CD4-positive, alpha-beta memory T cell (primary cell): ENCODE measurements at regions of chr19 and their contacts with region 1.

Region 1: GRCh38 chr19:57578487-57579205 is at the start of gene ZNF416:
- DNase-seq: peak; percentile 94 to 98 (median 97)
- H3K4me3 ChIP-seq: peak within 1 kb of the TSS; percentile 53 to 73
- H3K4me3 Mint-ChIP-seq: peak within 1 kb of the TSS; percentile 84 to 88 (median 88)
- H3K27ac ChIP-seq: peak within 1 kb of the TSS; percentile 68
- H3K27ac Mint-ChIP-seq: peak within 1 kb of the TSS; percentile 78 to 92 (median 86)
- H3K4me1 ChIP-seq: peaks cover 24% of the 10 kb centered on the region
- H3K4me1 Mint-ChIP-seq: peaks cover 17 to 36% (median 20%) of the 10 kb centered on the region in 4 donors
- H3K27me3 ChIP-seq: no peaks in the 10 kb centered on the region
- H3K27me3 Mint-ChIP-seq: no peaks in the 10 kb centered on the region
- total RNA-seq, gene ZNF416: 12.0 to 13.9 TPM

Region 2: GRCh38 chr19:57362997-57363705 is 215.5 kb before region 1 on chr19 and contains the starts of genes TRAPPC2B and ZNF547:
- CTCF ChIA-PET with region 1: no interaction called
- POLR2A ChIA-PET with region 1: no interaction called
- intact Hi-C with region 1: loop called (anchors 2 kb)
- DNase-seq: peak; percentile 97 to 99 (median 99)
- H3K4me3 ChIP-seq: peak within 1 kb of the TSS; percentile 51 to 70
- H3K4me3 Mint-ChIP-seq: peak within 1 kb of the TSS; percentile 92 to 97 (median 94)
- H3K27ac ChIP-seq: peak within 1 kb of the TSS; percentile 76
- H3K27ac Mint-ChIP-seq: peak within 1 kb of the TSS; percentile 97 to 99 (median 99)
- H3K4me1 ChIP-seq: peaks cover 12% of the 10 kb centered on the region
- H3K4me1 Mint-ChIP-seq: peaks cover 12 to 18% (median 16%) of the 10 kb centered on the region in 4 donors
- H3K27me3 ChIP-seq: no peaks in the 10 kb centered on the region
- H3K27me3 Mint-ChIP-seq: peaks cover 0 to 2% of the 10 kb centered on the region in 2 donors
- total RNA-seq, gene TRAPPC2B: 11.0 to 12.1 TPM
- total RNA-seq, gene ZNF547: 6.5 to 10.8 TPM

Region 3: DNA sequence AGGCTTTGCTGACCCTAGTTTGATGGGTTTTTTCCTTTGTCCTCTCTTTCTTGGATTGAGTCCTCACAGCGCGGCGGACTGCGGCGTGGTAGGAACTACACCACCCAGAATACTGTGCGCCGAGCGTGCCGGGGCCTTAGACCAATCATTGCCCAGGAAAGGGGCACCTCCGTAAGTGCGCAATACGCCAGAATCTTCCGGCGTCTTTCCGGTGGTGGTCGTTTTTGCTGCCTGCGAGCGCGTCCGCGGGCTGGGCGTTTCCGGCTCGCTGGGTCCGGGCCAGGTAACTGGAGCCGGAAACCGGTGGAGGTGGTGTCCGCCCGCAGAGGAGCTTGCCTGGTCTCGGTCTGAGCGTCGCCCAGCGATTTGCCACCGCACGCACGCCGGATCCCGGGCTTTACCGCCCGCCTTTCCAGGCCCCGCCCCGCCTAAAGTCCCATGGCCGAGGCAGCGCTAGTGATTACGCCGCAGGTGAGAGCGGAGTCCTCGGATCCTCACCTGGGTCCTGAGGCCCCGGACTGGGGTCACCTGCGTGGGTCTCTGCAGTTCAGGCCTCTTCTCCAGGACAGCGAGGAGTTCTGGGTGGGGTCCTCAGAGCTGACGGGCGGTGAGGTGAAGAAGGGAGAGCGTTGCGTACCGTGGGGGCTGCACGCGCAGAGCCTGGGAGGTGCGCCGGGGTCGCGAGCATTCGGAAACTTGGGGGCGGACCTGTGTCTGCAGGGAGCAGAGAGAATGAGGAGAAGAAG is 51.3 kb before region 1 on chr19 and contains the start of gene ZNF549:
- CTCF ChIA-PET with region 1: no interaction called
- POLR2A ChIA-PET with region 1: interaction called, 5 read pairs
- intact Hi-C with region 1: loop called (anchors 1 kb)
- DNase-seq: peak; percentile 88 to 93 (median 90)
- H3K4me3 ChIP-seq: peak within 1 kb of the TSS; percentile 15 to 99
- H3K4me3 Mint-ChIP-seq: peak within 1 kb of the TSS; percentile 86 to 98 (median 92)
- H3K27ac ChIP-seq: peak within 1 kb of the TSS; percentile 79
- H3K27ac Mint-ChIP-seq: peak within 1 kb of the TSS; percentile 86 to 97 (median 92)
- H3K4me1 ChIP-seq: peaks cover 16% of the 10 kb centered on the region
- H3K4me1 Mint-ChIP-seq: peaks cover 16 to 31% (median 22%) of the 10 kb centered on the region in 4 donors
- H3K27me3 ChIP-seq: no peaks in the 10 kb centered on the region
- H3K27me3 Mint-ChIP-seq: peaks cover 0 to 4% of the 10 kb centered on the region in 2 donors
- total RNA-seq, gene ZNF549: 20.5 to 21.8 TPM

Region 4: GRCh38 chr19:57613941-57614743 is 35.5 kb after region 1 on chr19 and contains the start of gene ZNF134:
- CTCF ChIA-PET with region 1: no interaction called
- POLR2A ChIA-PET with region 1: interaction called, 7 read pairs
- intact Hi-C with region 1: loop called (anchors 2 kb)
- DNase-seq: peak; percentile 86 to 88 (median 87)
- H3K4me3 ChIP-seq: peak within 1 kb of the TSS; percentile 78 to 92
- H3K4me3 Mint-ChIP-seq: peak within 1 kb of the TSS; percentile 89 to 94 (median 92)
- H3K27ac ChIP-seq: peak within 1 kb of the TSS; percentile 58
- H3K27ac Mint-ChIP-seq: peak within 1 kb of the TSS; percentile 57 to 90 (median 88)
- H3K4me1 ChIP-seq: peaks cover 18% of the 10 kb centered on the region
- H3K4me1 Mint-ChIP-seq: peaks cover 17 to 42% (median 32%) of the 10 kb centered on the region in 4 donors
- H3K27me3 ChIP-seq: no peaks in the 10 kb centered on the region
- H3K27me3 Mint-ChIP-seq: no peaks in the 10 kb centered on the region
- total RNA-seq, gene ZNF134: 32.1 to 32.3 TPM

Region 5: DNA sequence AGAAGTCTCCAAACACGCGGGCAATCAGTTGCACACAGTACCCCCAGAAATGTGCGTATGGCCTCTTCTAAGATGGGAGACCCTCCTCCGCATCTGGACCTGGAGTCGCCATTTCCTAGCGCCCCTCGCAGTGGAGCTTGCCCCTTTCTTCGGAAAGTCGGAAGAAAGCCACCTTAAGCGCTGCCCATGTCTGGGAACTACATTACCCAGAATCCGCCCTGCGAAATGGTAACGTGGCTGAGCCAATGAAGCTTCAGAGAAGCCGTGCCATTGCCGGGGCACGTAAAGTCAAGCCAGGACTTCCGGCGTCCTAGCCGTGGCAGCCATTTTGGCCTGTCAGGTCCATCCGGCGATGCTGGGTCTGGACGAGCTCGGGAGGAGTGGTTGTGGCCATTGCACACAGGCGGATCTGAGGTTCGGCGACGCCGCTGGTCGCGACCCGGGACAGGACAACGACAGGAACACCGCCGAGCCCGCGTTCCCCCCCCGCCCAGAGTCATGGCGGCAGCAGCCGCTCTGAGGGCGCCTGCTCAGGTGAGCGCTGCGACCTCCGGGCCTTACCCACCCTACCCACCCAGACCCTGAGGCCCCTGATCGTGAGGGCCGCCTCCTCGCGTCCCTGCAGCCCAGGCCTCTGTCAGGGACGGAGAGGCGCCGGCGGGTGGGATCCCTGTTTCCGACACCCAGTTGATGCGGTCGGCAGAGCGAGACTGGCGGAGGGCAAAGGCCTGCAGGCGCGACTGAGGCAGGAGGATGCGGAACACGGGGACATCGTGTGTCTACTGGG is 190.9 kb after region 1 on chr19 and contains the start of gene ZNF586:
- CTCF ChIA-PET with region 1: no interaction called
- POLR2A ChIA-PET with region 1: interaction called, 3 read pairs
- intact Hi-C with region 1: loop called (anchors 1 kb)
- DNase-seq: peak; percentile 82 to 91 (median 85)
- H3K4me3 ChIP-seq: peak within 1 kb of the TSS; percentile 62 to 75
- H3K4me3 Mint-ChIP-seq: peak within 1 kb of the TSS; percentile 96 to 99 (median 96)
- H3K27ac ChIP-seq: peak within 1 kb of the TSS; percentile 75
- H3K27ac Mint-ChIP-seq: peak within 1 kb of the TSS; percentile 91 to 98 (median 96)
- H3K4me1 ChIP-seq: peaks cover 20% of the 10 kb centered on the region
- H3K4me1 Mint-ChIP-seq: peaks cover 23 to 51% (median 33%) of the 10 kb centered on the region in 4 donors
- H3K27me3 ChIP-seq: no peaks in the 10 kb centered on the region
- H3K27me3 Mint-ChIP-seq: no peaks in the 10 kb centered on the region
- total RNA-seq, gene ZNF586: 46.4 to 51.7 TPM

Region 6: GRCh38 chr19:58154679-58155648 is 576.3 kb after region 1 on chr19:
- CTCF ChIA-PET with region 1: no interaction called
- POLR2A ChIA-PET with region 1: interaction called, 3 read pairs
- intact Hi-C with region 1: loop called (anchors 2 kb)
- DNase-seq: peak; percentile 92 to 99 (median 96)
- H3K4me3 ChIP-seq: peak overlapping the region; percentile 88
- H3K4me3 Mint-ChIP-seq: peak overlapping the region; percentile 71 to 89 (median 84)
- H3K27ac ChIP-seq: peak overlapping the region; percentile 80
- H3K27ac Mint-ChIP-seq: peak overlapping the region; percentile 41 to 85 (median 69)
- H3K4me1 ChIP-seq: peaks cover 16% of the 10 kb centered on the region
- H3K4me1 Mint-ChIP-seq: peaks cover 5 to 24% (median 10%) of the 10 kb centered on the region in 4 donors
- H3K27me3 ChIP-seq: no peaks in the 10 kb centered on the region
- H3K27me3 Mint-ChIP-seq: no peaks in the 10 kb centered on the region